Endothelial cell of umbilical vein (primary cell): ENCODE measurements at regions of chr1 and their contacts with region 1.

Region 1: GRCh38 chr1:155250633-155251449 is 4.4 kb downstream of the ENTREP3 start:
- DNase-seq: peak; percentile 89
- H3K4me3 ChIP-seq: peak overlapping the region in 1 of 3 experiments; percentile 12
- H3K27ac ChIP-seq: no peak overlapping the region
- H3K4me1 ChIP-seq: peaks cover 26% of the 10 kb centered on the region
- H3K27me3 ChIP-seq: no peaks in the 10 kb centered on the region
- CTCF ChIP-seq: peak; percentile 100
- POLR2A ChIP-seq: no peak

Region 2: DNA sequence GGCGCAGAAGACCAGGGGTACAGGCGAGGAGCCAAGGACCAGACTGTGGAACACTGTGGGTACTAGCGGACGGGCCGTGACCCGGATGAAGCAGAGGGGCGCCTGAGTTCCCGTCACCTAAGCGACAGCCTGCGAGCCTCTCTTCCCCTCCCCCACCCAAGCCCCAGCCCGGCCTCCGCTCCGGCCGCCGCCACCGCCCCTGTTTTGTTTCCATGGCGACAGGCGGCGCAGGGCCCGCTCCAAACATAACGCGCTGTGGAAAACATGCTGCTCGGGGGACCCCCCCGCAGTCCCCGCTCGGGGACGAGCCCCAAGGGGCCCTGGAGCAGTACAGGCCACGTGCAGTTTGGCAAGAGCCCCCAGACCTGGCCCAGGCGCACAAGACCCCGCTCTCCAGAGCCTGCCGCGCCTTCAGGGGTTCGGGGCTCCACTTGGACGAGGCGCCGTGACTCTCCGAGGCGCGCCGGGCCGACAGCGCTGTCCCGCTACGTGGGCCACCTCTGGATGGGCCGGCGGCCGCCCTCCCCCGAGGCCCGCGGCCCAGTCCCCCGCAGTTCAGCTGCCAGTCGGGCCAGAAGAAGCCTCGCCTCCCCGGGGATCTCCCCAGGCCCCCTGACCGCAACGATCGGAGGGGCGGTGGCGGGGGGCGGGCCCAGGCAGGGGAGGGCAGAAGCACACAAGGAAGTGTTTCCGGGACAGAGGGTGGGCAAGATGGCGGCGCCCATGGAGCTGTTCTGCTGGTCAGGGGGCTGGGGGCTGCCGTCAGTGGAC is 42.1 kb before region 1 on chr1 and contains the start of gene MTX1:
- CTCF ChIA-PET with region 1: interaction called, 28 read pairs
- POLR2A ChIA-PET with region 1: no interaction called
- dilution Hi-C with region 1: no loop called
- intact Hi-C with region 1: no loop called
- DNase-seq: peak; percentile 83
- H3K4me3 ChIP-seq: peak within 1 kb of the TSS; percentile 30 to 92 (median 82)
- H3K27ac ChIP-seq: peak within 1 kb of the TSS; percentile 87
- H3K4me1 ChIP-seq: peaks cover 21% of the 10 kb centered on the region
- H3K27me3 ChIP-seq: no peaks in the 10 kb centered on the region
- CTCF ChIP-seq: no peak
- POLR2A ChIP-seq: peak; percentile 71
- total RNA-seq, gene MTX1: 49.1 and 53.0 TPM in 2 replicates

Region 3: GRCh38 chr1:155277070-155277895 is 26.4 kb after region 1 on chr1 and contains the start of gene HCN3:
- CTCF ChIA-PET with region 1: interaction called, 11 read pairs
- POLR2A ChIA-PET with region 1: no interaction called
- dilution Hi-C with region 1: no loop called
- intact Hi-C with region 1: loop called (anchors 2 kb)
- DNase-seq: peak; percentile 97
- H3K4me3 ChIP-seq: peak within 1 kb of the TSS; percentile 15 to 68 (median 53)
- H3K27ac ChIP-seq: no peak within 1 kb of the TSS
- H3K4me1 ChIP-seq: peaks cover 15% of the 10 kb centered on the region
- H3K27me3 ChIP-seq: peaks cover 0 to 2% of the 10 kb centered on the region in 2 experiments
- CTCF ChIP-seq: peak; percentile 54 to 76
- POLR2A ChIP-seq: no peak
- total RNA-seq, gene HCN3: 1.8 and 3.3 TPM in 2 replicates

Region 4: GRCh38 chr1:155323798-155324610 is 73.2 kb after region 1 on chr1:
- CTCF ChIA-PET with region 1: interaction called, 115 read pairs
- POLR2A ChIA-PET with region 1: interaction called, 8 read pairs
- dilution Hi-C with region 1: no loop called
- intact Hi-C with region 1: loop called (anchors 1 kb)
- DNase-seq: peak; percentile 95
- H3K4me3 ChIP-seq: peak overlapping the region; percentile 61 to 76 (median 70)
- H3K27ac ChIP-seq: peak overlapping the region; percentile 40
- H3K4me1 ChIP-seq: peaks cover 41% of the 10 kb centered on the region
- H3K27me3 ChIP-seq: no peaks in the 10 kb centered on the region
- CTCF ChIP-seq: no peak
- POLR2A ChIP-seq: peak; percentile 56

Region 5: DNA sequence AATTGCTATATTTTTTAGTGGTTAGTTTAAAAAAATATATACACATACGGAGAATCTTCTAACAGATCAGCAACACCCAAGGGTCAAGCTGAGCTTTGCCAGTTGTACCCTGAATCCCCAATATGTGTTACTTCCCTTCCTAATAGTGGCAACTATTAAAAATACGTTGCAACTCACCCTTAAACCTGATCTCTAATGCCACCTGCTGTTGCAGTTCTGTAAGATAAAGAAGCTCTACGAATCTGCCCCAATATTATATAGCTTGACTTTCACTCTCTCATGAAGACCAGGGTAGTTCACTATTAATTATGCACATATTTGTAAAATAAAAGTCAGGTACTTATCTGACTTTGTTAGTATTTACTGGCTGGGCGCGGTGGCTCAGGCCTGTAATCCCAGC is 253.4 kb after region 1 on chr1:
- CTCF ChIA-PET with region 1: interaction called, 21 read pairs
- POLR2A ChIA-PET with region 1: no interaction called
- dilution Hi-C with region 1: no loop called
- intact Hi-C with region 1: no loop called
- DNase-seq: peak; percentile 45
- H3K4me3 ChIP-seq: no peak overlapping the region
- H3K27ac ChIP-seq: no peak overlapping the region
- H3K4me1 ChIP-seq: no peaks in the 10 kb centered on the region
- H3K27me3 ChIP-seq: no peaks in the 10 kb centered on the region
- CTCF ChIP-seq: peak; percentile 7 to 13
- POLR2A ChIP-seq: no peak

Region 6: DNA sequence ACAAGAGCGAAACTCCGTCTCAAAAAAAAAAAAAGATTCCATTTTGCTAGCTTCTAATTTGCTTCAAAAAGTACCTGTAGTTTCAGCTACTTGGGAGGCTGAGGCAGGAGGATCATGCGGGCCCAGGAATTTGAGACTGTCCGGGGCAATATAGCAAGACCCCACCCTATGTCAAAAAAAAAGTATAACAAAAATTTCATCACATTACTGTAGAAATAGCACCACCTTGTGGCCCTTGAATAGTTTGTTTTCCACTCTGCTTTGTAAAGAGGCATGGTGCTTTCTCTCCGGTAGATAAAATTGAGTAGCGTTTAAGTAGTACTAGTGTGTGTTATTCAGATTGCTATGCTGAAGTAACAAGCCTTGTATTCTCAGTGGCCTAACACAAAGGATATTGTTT is 340.9 kb after region 1 on chr1:
- CTCF ChIA-PET with region 1: interaction called, 13 read pairs
- POLR2A ChIA-PET with region 1: no interaction called
- dilution Hi-C with region 1: no loop called
- intact Hi-C with region 1: loop called (anchors 1 kb)
- DNase-seq: peak; percentile 65
- H3K4me3 ChIP-seq: no peak overlapping the region
- H3K27ac ChIP-seq: no peak overlapping the region
- H3K4me1 ChIP-seq: no peaks in the 10 kb centered on the region
- H3K27me3 ChIP-seq: no peaks in the 10 kb centered on the region
- CTCF ChIP-seq: peak; percentile 20 to 28
- POLR2A ChIP-seq: no peak